GM12878 (cell line): ENCODE measurements at regions of chr1 and their contacts with region 1.

Region 1: DNA sequence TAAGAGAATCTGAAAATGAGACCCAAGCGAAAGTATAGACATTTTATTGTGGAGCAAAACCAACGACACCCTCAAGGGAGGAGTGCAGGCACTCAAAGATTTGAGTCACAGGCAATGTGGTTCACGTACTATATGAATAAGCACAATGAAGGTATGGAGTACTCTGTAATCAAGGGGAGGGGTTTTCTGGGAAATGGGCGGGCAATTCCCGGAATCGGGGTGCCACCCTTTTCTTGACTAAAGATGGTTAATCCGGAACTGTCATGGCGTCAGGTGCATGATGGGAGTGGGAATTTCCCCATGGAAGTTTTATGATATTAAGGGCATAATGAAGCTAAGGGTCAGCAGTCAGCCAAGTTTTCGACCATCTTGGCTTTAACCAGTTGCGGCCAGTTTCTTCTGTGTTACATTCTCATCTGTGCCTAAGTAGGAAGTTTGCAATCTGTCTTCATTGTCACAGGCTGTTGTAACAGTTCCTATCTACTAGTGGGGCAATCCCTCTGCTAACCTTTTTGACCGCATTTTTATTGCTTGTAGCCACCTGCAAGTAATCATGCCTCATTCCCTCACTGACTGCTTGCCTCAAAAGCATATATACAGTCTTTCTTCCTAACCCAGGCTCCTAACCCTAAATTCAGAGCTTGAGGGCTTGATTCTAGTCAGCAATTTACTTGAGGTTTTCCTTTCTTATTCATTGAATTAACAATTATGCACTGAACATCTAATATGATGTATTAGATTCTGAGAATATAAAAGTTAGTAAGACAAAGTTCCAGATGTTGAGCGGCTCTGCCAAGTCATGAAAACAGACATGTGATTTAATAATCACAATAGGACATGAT is 775 bp upstream of the AIM2 start:
- DNase-seq: peak; percentile 94
- ATAC-seq: peak; percentile 74
- H3K4me3 ChIP-seq: peak overlapping the region; percentile 64
- H3K27ac ChIP-seq: peak overlapping the region; percentile 89
- H3K4me1 ChIP-seq: peaks cover 11% of the 10 kb centered on the region
- H3K27me3 ChIP-seq: no peaks in the 10 kb centered on the region
- CTCF ChIP-seq: no peak
- EP300 ChIP-seq: peak; percentile 44 to 47; a peak in 2 of 4 replicates
- POLR2A ChIP-seq: peak; percentile 56; the same call in 1 of the 2 replicates
- RAD21 ChIP-seq: no peak

Region 2: DNA sequence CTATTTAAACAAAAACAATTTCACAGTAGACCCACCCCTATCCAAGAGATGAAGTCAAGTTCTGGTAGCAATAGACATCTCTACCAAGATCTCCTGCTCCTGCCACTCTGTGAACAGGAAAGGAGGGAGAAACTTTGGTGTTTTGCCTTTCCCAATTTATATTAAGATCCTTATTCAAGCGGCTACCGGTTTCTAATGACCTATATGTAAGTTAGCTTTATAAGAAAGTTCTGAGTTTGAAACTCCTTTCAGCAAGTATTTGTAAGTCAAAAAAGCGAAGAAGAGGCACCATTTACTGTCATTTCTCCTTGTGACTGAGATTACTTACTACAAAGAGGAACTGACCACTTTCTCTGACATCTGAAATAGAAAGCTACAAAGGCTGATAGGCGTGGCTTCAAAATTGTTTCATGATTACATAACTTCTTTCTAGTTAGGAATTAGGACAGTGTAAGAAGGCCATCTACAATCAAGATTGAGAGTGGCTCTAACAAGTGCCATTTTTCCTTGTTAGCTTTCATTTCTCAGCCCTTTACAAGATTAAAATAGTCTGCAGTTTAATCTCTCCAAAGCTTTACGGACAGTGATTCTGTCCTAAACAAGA is 246.3 kb before region 1 on chr1 and contains the start of gene MNDA:
- CTCF ChIA-PET with region 1: interaction called, 6 read pairs
- POLR2A ChIA-PET with region 1: interaction called, 7 read pairs
- RAD21 ChIA-PET with region 1: interaction called, 26 read pairs
- SMC1A ChIA-PET with region 1: interaction called, 28 read pairs
- in situ Hi-C with region 1: loop called (anchors 5 kb)
- intact Hi-C with region 1: loop called (anchors 2 kb)
- DNase-seq: peak; percentile 82
- ATAC-seq: peak; percentile 90
- H3K4me3 ChIP-seq: peak within 1 kb of the TSS; percentile 68
- H3K27ac ChIP-seq: peak within 1 kb of the TSS; percentile 97
- H3K4me1 ChIP-seq: peaks cover 9% of the 10 kb centered on the region; the same call in 1 of the 2 replicates
- H3K27me3 ChIP-seq: no peaks in the 10 kb centered on the region
- CTCF ChIP-seq: no peak
- EP300 ChIP-seq: peak; percentile 53 to 61; a peak in 1 of 4 replicates
- POLR2A ChIP-seq: peak; percentile 41; the same call in 1 of the 2 replicates
- RAD21 ChIP-seq: no peak
- polyA plus RNA-seq, gene MNDA: 81.9 to 91.8 TPM

Region 3: DNA sequence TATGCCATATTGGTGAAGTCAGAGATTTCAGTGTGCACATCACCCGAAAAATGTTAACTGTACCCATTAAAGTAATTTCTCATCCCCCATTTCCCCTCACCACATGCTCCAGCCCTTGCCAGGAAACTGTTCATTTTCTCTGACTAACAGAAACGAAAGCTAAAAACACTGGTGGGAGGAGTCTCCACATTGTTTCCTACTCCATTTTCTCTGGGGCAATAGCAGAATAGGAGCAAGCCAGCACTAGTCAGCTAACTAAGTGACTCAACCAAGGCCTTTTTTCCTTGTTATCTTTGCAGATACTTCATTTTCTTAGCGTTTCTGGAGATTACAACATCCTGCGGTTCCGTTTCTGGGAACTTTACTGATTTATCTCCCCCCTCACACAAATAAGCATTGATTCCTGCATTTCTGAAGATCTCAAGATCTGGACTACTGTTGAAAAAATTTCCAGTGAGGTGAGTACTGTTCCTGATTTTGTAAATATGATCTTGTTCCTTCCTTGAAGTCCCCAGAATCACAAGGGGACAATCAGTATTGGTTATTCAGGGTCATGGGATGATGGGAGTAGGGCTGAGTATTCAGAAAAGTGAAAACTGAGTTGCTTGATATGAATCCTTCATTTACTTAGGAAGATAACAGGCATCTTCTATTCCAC is 67.5 kb before region 1 on chr1 and contains the start of gene IFI16:
- CTCF ChIA-PET with region 1: interaction called, 37 read pairs
- POLR2A ChIA-PET with region 1: interaction called, 46 read pairs
- RAD21 ChIA-PET with region 1: interaction called, 39 read pairs
- SMC1A ChIA-PET with region 1: interaction called, 32 read pairs
- in situ Hi-C with region 1: no loop called
- intact Hi-C with region 1: loop called (anchors 1 kb)
- DNase-seq: peak; percentile 87
- ATAC-seq: peak; percentile 73
- H3K4me3 ChIP-seq: peak within 1 kb of the TSS; percentile 91
- H3K27ac ChIP-seq: peak within 1 kb of the TSS; percentile 100
- H3K4me1 ChIP-seq: peaks cover 15% of the 10 kb centered on the region; the same call in 1 of the 2 replicates
- H3K27me3 ChIP-seq: no peaks in the 10 kb centered on the region
- CTCF ChIP-seq: no peak
- EP300 ChIP-seq: peak; percentile 25 to 37; a peak in 1 of 4 replicates
- POLR2A ChIP-seq: peak; percentile 80
- RAD21 ChIP-seq: no peak
- polyA plus RNA-seq, gene IFI16: 191 to 255 TPM

Region 4: GRCh38 chr1:159015440-159015909 is 61.9 kb before region 1 on chr1:
- CTCF ChIA-PET with region 1: interaction called, 37 read pairs
- POLR2A ChIA-PET with region 1: interaction called, 46 read pairs
- RAD21 ChIA-PET with region 1: interaction called, 25 read pairs
- SMC1A ChIA-PET with region 1: interaction called, 32 read pairs
- in situ Hi-C with region 1: no loop called
- intact Hi-C with region 1: no loop called
- DNase-seq: peak; percentile 84
- ATAC-seq: peak; percentile 83
- H3K4me3 ChIP-seq: peak overlapping the region; percentile 64
- H3K27ac ChIP-seq: peak overlapping the region; percentile 100
- H3K4me1 ChIP-seq: peaks cover 7% of the 10 kb centered on the region
- H3K27me3 ChIP-seq: no peaks in the 10 kb centered on the region
- CTCF ChIP-seq: no peak
- EP300 ChIP-seq: no peak
- POLR2A ChIP-seq: peak; percentile 81
- RAD21 ChIP-seq: no peak

Region 5: GRCh38 chr1:159089184-159089791 is 11.9 kb after region 1 on chr1:
- CTCF ChIA-PET with region 1: interaction called, 61 read pairs
- POLR2A ChIA-PET with region 1: interaction called, 4 read pairs
- RAD21 ChIA-PET with region 1: interaction called, 28 read pairs
- SMC1A ChIA-PET with region 1: interaction called, 43 read pairs
- in situ Hi-C with region 1: no loop called
- intact Hi-C with region 1: no loop called
- DNase-seq: no peak
- ATAC-seq: peak; percentile 83
- H3K4me3 ChIP-seq: no peak overlapping the region
- H3K27ac ChIP-seq: no peak overlapping the region
- H3K4me1 ChIP-seq: no peaks in the 10 kb centered on the region
- H3K27me3 ChIP-seq: 0 out of 4 replicates have a peak, but pooled peaks cover 0 to 2% of the 10 kb centered on the region in 2 experiments
- CTCF ChIP-seq: peak; percentile 58 to 73 (median 71)
- EP300 ChIP-seq: no peak
- POLR2A ChIP-seq: no peak
- RAD21 ChIP-seq: peak; percentile 62

Region 6: DNA sequence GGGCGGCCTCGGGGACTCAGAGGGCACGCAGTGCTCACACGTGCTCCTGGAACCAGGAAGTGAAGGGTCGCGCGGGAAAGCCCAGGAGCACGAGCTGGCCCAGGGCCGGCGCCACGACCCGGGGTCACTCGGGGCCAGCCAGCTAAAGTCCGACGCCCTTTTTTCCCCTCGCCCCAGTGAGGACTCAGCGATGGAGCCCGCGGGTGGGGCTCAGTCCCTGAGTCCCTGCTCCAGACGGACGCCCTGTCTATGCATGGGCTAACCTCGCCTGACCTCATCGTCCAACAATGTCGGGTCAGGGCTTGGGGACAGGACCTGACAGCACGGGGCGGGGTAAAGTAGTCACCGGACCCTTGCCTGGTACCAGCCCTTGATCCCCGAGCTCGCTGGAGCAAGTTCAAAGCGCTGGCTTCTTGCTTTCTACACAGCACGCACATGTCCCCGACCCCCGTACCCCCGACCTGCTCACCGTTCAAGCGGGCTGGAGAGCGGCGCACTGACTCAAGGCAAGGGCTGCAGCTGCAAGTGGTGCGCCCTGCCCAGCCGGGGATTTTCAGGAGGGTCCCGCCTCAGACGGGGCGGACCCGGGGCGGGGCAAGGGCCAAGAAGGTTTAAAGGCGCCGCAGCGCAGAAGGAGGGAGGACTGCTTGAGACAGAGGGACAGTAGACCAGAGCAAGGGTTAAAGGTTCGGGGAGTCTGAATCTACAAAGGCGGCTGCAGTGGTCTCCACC is 847.8 kb after region 1 on chr1 and contains the start of gene TAGLN2:
- CTCF ChIA-PET with region 1: no interaction called
- POLR2A ChIA-PET with region 1: interaction called, 12 read pairs
- RAD21 ChIA-PET with region 1: interaction called, 4 read pairs
- SMC1A ChIA-PET with region 1: no interaction called
- in situ Hi-C with region 1: no loop called
- intact Hi-C with region 1: loop called (anchors 10 kb)
- DNase-seq: peak; percentile 60
- ATAC-seq: peak; percentile 73
- H3K4me3 ChIP-seq: peak within 1 kb of the TSS; percentile 82
- H3K27ac ChIP-seq: peak within 1 kb of the TSS; percentile 82
- H3K4me1 ChIP-seq: peaks cover 32% of the 10 kb centered on the region
- H3K27me3 ChIP-seq: no peaks in the 10 kb centered on the region
- CTCF ChIP-seq: no peak
- EP300 ChIP-seq: no peak
- POLR2A ChIP-seq: peak; percentile 99
- RAD21 ChIP-seq: no peak
- polyA plus RNA-seq, gene TAGLN2: 216 to 262 TPM